Dorsolateral prefrontal cortex (tissue), 120 donors: ENCODE measurements at regions of chr4 and their contacts with region 1.

Region 1: DNA sequence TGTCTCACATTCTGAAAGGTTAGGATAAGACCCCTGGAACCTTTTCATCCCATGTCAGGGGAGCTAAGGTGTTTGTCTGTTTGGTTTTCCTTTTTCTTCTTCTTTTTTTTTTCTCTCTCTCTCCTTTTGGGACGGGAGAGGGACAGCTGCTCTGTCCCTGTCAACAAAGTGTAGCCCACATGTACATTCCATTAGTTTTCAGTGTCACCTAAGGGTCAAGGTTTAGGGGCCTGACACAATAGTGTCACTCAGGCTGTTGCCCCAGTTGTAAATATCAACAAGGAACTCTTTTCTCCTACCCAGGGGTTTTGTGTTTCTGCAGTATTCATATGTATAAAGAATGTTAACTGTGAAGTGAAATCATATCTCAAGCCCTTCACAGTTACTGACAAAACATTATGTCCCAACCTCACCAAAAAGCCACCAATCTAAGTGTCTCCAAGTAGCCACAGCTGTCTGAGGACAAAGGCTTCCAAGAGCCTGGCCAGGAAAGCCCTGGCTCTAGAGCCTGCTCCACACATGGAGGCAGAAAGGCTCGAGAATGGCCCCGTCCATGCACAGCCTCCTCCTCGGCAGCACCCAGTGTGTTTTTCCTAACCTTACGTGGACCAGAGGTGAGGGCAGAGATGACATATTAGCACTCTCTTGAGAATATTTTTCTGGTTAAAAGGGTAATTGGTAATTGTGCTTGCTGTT is 9.4 kb downstream of the IRF2 start:
- DNase-seq: no peak
- H3K4me3 ChIP-seq: no peak overlapping the region
- H3K27ac ChIP-seq: peak overlapping the region in 7 of 59 donors; percentile 0 to 52 (median 24)
- H3K27me3 ChIP-seq: no peaks in the 10 kb centered on the region
- CTCF ChIP-seq: no peak

Region 2: DNA sequence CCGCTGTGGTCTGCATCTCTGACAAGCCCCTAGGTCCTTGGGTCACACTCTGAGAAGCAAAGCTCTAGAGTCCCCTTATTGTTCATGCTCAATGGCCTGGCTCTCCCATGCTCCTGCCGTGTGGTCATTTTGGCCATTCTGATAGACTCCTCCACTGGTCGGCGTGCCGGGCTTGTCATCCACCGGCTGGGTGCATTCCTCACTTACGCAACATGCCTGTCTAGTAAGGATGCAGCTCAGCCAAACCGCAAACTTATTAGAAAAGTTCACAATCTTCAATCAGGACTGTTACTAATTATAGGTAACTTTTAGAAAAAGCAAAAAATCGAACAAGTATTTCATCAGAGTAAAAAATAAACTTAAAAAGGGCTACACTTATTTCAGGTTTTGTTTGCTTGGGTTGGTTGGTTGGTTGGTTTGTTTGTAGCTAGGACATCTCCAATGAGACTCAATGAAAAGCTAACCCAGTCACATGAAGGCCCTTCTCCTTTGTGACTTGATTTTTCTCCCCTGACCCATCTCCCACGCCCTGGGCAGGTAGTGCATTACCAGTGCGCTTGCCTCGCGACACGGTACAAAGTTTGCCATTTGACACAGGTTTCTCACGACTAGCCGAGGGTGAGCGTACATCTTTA is 31.5 kb before region 1 on chr4:
- intact Hi-C with region 1: loop called in 1 of 2 experiments (anchors 5 kb)
- DNase-seq: no peak
- H3K4me3 ChIP-seq: no peak overlapping the region
- H3K27ac ChIP-seq: peak overlapping the region in 20 of 59 donors; percentile 14 to 83 (median 55)
- H3K27me3 ChIP-seq: no peaks in the 10 kb centered on the region
- CTCF ChIP-seq: no peak